H1 (cell line): ENCODE measurements at regions of chr20 and their contacts with region 1.

Region 1: DNA sequence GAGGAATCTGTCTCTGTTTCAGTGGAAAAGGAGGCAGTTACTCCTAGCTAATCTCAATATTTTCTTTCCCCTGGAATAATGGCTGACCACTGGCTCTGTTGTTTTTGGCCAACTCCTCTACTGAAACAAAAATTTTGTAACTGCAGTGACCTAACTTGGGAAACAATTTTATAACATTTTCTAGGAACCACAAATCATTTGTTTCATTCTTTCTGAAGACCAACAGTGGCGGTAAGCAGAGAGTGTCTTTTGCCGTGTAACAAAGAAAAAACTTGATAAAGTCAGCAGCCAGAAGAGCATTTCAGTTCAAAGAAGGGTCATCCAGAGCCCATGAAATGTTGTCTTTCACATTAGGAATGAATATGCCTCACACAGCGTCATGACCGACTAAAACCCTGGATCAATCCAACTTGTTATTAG is 11.8 kb upstream of the BFSP1 start:
- DNase-seq: no peak
- H3K4me3 ChIP-seq: no peak overlapping the region
- H3K27ac ChIP-seq: no peak overlapping the region
- H3K4me1 ChIP-seq: no peaks in the 10 kb centered on the region
- H3K27me3 ChIP-seq: no peaks in the 10 kb centered on the region
- CTCF ChIP-seq: no peak
- EP300 ChIP-seq: no peak
- POLR2A ChIP-seq: no peak
- RAD21 ChIP-seq: no peak

Region 2: GRCh38 chr20:17558154-17558940 is 15.3 kb after region 1 on chr20:
- CTCF ChIA-PET with region 1: interaction called, 26 read pairs
- POLR2A ChIA-PET with region 1: interaction called, 6 read pairs
- DNase-seq: peak in 1 of 2 experiments; percentile 45
- H3K4me3 ChIP-seq: no peak overlapping the region
- H3K27ac ChIP-seq: 0 out of 2 replicates have a peak overlapping the region, but pooled peaks have one; percentile 1
- H3K4me1 ChIP-seq: peaks cover 7 to 10% (median 9%) of the 10 kb centered on the region in 4 experiments; a peak in 5 of 7 replicates
- H3K27me3 ChIP-seq: no peaks in the 10 kb centered on the region
- CTCF ChIP-seq: no peak
- EP300 ChIP-seq: no peak
- POLR2A ChIP-seq: peak in 1 of 2 experiments; percentile 49; a peak in 1 of 3 replicates
- RAD21 ChIP-seq: no peak